ENCODE measurements at regions of chr1 and their contacts with region 1.

Region 1: DNA sequence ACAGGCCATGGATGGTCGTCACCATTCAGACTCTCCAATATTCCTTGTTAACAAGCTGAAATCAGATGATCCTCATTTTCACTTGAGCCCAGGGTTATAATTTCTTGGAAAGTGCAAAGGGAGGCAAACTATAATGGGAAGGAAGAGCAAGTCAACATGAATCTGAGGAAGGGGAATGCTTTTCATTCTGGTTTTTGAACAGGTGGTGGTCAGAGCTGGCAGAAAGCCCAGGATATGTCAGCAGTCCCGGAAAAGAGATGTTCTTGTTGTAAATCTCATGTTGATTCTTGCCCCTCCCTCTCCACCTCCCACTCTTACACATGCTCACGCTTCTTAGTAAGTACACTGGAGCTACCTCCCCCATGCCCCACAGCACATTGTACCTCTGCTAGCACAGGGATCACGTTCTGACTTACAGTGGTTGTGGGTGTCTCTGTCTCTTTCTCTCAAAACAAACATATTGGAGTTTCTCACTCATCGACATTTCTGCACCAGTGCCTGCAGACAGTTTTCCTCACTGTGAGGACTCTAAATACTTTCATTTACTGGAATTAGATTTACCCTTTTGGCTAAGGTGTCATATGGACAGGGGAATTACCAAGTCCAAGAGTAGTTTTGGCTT is 77.6 kb downstream of the XCL2 start:
- DNase-seq: peak; percentile 88
- ATAC-seq: peak; percentile 89
- H3K4me3 ChIP-seq: peak overlapping the region; percentile 25; the same call in 1 of the 2 replicates
- H3K27ac ChIP-seq: peak overlapping the region; percentile 56
- H3K4me1 ChIP-seq: peaks cover 25% of the 10 kb centered on the region
- H3K27me3 ChIP-seq: no peaks in the 10 kb centered on the region
- CTCF ChIP-seq: no peak
- EP300 ChIP-seq: peak; percentile 23 to 46; a peak in 1 of 4 replicates
- POLR2A ChIP-seq: no peak
- RAD21 ChIP-seq: no peak

Region 2: GRCh38 chr1:168452329-168452728 is 13.9 kb before region 1 on chr1:
- CTCF ChIA-PET with region 1: interaction called, 7 read pairs
- POLR2A ChIA-PET with region 1: interaction called, 9 read pairs
- RAD21 ChIA-PET with region 1: interaction called, 18 read pairs
- SMC1A ChIA-PET with region 1: interaction called, 102 read pairs
- in situ Hi-C with region 1: no loop called
- intact Hi-C with region 1: no loop called
- DNase-seq: no peak
- ATAC-seq: peak; percentile 63
- H3K4me3 ChIP-seq: no peak overlapping the region
- H3K27ac ChIP-seq: no peak overlapping the region
- H3K4me1 ChIP-seq: no peaks in the 10 kb centered on the region
- H3K27me3 ChIP-seq: no peaks in the 10 kb centered on the region
- CTCF ChIP-seq: peak; percentile 24 to 32 (median 29); a peak in 2 of 6 replicates
- EP300 ChIP-seq: no peak
- POLR2A ChIP-seq: no peak
- RAD21 ChIP-seq: peak; percentile 42

Region 3: DNA sequence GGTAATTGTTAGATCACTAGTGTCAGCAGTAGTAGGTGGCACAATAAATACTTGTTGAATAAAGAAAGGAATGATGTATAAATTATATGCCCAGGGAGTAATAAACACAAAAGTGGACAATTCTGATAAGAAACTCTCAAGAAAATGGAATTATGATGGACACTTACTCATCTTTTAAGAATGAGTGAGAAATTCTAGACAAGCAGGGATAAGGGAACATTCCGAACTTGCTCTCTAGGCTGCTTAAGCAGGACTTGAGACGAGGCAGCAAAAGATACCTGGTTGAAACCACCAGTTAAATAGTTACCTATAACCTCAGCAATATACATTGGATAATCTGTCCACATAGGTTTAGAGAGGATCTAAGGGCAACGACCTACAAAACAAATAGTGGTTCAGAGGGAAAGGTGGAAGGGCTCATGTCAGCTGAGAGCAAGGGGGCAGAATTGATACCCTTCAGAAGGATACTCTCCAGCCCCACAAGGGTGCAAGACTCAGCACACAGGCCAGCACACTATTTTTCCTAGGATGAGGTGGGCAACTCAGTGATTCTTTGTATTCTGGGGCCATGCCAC is 31.3 kb after region 1 on chr1:
- CTCF ChIA-PET with region 1: interaction called, 25 read pairs
- POLR2A ChIA-PET with region 1: interaction called, 6 read pairs
- RAD21 ChIA-PET with region 1: interaction called, 15 read pairs
- SMC1A ChIA-PET with region 1: interaction called, 125 read pairs
- in situ Hi-C with region 1: no loop called
- intact Hi-C with region 1: no loop called
- DNase-seq: no peak
- ATAC-seq: no peak
- H3K4me3 ChIP-seq: no peak overlapping the region
- H3K27ac ChIP-seq: no peak overlapping the region
- H3K4me1 ChIP-seq: no peaks in the 10 kb centered on the region; the same call in 1 of the 2 replicates
- H3K27me3 ChIP-seq: no peaks in the 10 kb centered on the region
- CTCF ChIP-seq: no peak
- EP300 ChIP-seq: no peak
- POLR2A ChIP-seq: no peak
- RAD21 ChIP-seq: no peak

Region 4: DNA sequence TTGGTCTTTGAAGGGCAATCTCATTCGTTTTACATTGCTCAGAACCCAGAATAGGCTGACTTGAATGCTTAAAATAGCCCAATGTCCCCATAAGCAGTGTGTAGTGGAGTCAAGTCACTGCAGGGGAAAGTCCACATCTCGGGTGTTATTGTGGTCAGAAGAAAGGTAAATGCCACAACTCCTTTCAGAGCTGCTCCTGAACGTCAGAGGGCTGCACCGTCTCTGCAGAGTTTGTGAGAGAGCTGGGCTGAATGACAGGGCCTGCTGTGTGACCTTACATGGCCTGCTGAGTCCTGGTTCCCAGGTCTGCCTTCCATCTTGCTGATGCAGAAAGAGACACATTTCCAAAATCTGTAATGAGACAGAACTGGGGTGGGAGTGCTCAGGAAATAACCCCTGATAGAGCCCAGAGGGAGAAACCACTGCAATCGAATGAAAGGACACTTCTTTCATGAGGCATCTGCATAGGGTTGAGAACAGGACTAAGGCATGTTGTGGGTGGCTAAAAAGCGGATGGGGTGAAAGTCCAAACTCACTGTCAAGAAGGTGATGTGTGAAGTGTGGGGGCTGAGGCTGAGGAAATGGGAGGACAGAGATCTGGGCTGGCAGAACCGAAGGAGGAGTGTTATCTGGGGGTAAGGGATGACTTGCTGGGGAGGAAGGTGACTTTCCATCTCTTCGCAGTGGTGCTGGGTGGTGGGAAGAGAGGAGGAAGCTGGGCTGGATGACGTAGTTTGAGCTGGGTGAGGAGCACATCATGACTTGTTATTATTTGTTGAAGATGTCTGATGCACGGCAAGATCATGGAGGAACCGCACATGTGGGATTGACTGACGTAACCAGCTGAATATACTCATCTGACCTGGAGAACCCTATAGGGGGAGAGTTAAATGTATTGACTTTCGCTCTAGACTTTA is 43.9 kb after region 1 on chr1:
- CTCF ChIA-PET with region 1: interaction called, 6 read pairs
- POLR2A ChIA-PET with region 1: interaction called, 52 read pairs
- RAD21 ChIA-PET with region 1: interaction called, 103 read pairs
- SMC1A ChIA-PET with region 1: interaction called, 125 read pairs
- in situ Hi-C with region 1: no loop called
- intact Hi-C with region 1: loop called (anchors 1 kb)
- DNase-seq: peak; percentile 88
- ATAC-seq: peak; percentile 90
- H3K4me3 ChIP-seq: no peak overlapping the region
- H3K27ac ChIP-seq: peak overlapping the region; percentile 61
- H3K4me1 ChIP-seq: peaks cover 16% of the 10 kb centered on the region
- H3K27me3 ChIP-seq: no peaks in the 10 kb centered on the region
- CTCF ChIP-seq: no peak
- EP300 ChIP-seq: peak; percentile 12 to 64; a peak in 3 of 4 replicates
- POLR2A ChIP-seq: no peak
- RAD21 ChIP-seq: no peak; the same call in 1 of the 2 replicates

Region 5: GRCh38 chr1:168535536-168535935 is 69.3 kb after region 1 on chr1:
- CTCF ChIA-PET with region 1: interaction called, 5 read pairs
- POLR2A ChIA-PET with region 1: interaction called, 3 read pairs
- RAD21 ChIA-PET with region 1: interaction called, 8 read pairs
- SMC1A ChIA-PET with region 1: interaction called, 16 read pairs
- in situ Hi-C with region 1: no loop called
- intact Hi-C with region 1: no loop called
- DNase-seq: no peak
- ATAC-seq: peak; percentile 94
- H3K4me3 ChIP-seq: no peak overlapping the region
- H3K27ac ChIP-seq: no peak overlapping the region
- H3K4me1 ChIP-seq: no peaks in the 10 kb centered on the region
- H3K27me3 ChIP-seq: no peaks in the 10 kb centered on the region
- CTCF ChIP-seq: no peak
- EP300 ChIP-seq: no peak
- POLR2A ChIP-seq: no peak
- RAD21 ChIP-seq: no peak

Region 6: DNA sequence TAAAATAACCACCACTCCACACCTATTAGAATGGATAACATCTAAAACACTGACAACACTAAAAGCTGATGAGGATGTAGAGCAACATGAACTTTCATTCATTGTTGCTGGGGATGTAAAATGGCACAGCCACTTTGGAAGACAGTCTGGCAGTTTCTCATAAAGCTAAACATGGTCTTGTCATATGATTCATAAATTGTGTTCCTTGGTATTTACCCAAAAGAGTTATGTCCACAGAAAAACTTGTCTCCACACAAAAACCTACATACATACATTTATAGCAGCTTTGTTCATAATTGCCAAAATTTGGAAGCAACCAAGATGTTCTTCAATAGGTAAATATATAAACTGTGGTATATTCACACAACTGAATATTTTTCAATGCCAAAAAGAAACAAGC is 94.2 kb after region 1 on chr1:
- CTCF ChIA-PET with region 1: interaction called, 5 read pairs
- POLR2A ChIA-PET with region 1: interaction called, 24 read pairs
- RAD21 ChIA-PET with region 1: interaction called, 25 read pairs
- SMC1A ChIA-PET with region 1: interaction called, 62 read pairs
- in situ Hi-C with region 1: no loop called
- intact Hi-C with region 1: loop called (anchors 10 kb)
- DNase-seq: no peak
- ATAC-seq: no peak
- H3K4me3 ChIP-seq: no peak overlapping the region
- H3K27ac ChIP-seq: no peak overlapping the region
- H3K4me1 ChIP-seq: no peaks in the 10 kb centered on the region
- H3K27me3 ChIP-seq: no peaks in the 10 kb centered on the region
- CTCF ChIP-seq: no peak
- EP300 ChIP-seq: no peak
- POLR2A ChIP-seq: no peak
- RAD21 ChIP-seq: no peak

Region 7: GRCh38 chr1:169106095-169106920 is 640.1 kb after region 1 on chr1 and contains the start of gene ATP1B1:
- CTCF ChIA-PET with region 1: no interaction called
- POLR2A ChIA-PET with region 1: no interaction called
- RAD21 ChIA-PET with region 1: no interaction called
- SMC1A ChIA-PET with region 1: no interaction called
- in situ Hi-C with region 1: no loop called
- intact Hi-C with region 1: no loop called
- DNase-seq: no peak
- ATAC-seq: peak; percentile 94
- H3K4me3 ChIP-seq: peak within 1 kb of the TSS; percentile 86
- H3K27ac ChIP-seq: no peak within 1 kb of the TSS
- H3K4me1 ChIP-seq: peaks cover 3% of the 10 kb centered on the region; the same call in 1 of the 2 replicates
- H3K27me3 ChIP-seq: peaks cover 2 to 6% of the 10 kb centered on the region in 2 experiments; a peak in 2 of 4 replicates
- CTCF ChIP-seq: peak in 2 of 3 experiments; percentile 21 to 36; a peak in 3 of 6 replicates
- EP300 ChIP-seq: no peak
- POLR2A ChIP-seq: peak; percentile 84
- RAD21 ChIP-seq: no peak
- polyA plus RNA-seq, gene ATP1B1: 0.84 to 0.90 TPM

Measured in GM12878 (cell line).